Ovary (tissue), 10 donors: ENCODE measurements at regions of chr20 and their contacts with region 1.

Region 1: GRCh38 chr20:38057351-38057972 is 23.9 kb downstream of the RPRD1B start:
- DNase-seq: peak; percentile 74 to 89 (median 86)
- H3K4me3 ChIP-seq: no peak overlapping the region
- H3K27ac ChIP-seq: no peak overlapping the region
- H3K4me1 ChIP-seq: no peaks in the 10 kb centered on the region
- H3K27me3 ChIP-seq: no peaks in the 10 kb centered on the region
- CTCF ChIP-seq: peak; percentile 72 to 83 (median 77)
- EP300 ChIP-seq: no peak
- POLR2A ChIP-seq: no peak

Region 2: GRCh38 chr20:37777012-37777950 is 280.2 kb before region 1 on chr20:
- intact Hi-C with region 1: no loop called
- DNase-seq: no peak
- H3K4me3 ChIP-seq: no peak overlapping the region
- H3K27ac ChIP-seq: no peak overlapping the region
- H3K4me1 ChIP-seq: no peaks in the 10 kb centered on the region
- H3K27me3 ChIP-seq: no peaks in the 10 kb centered on the region
- CTCF ChIP-seq: no peak
- EP300 ChIP-seq: no peak
- POLR2A ChIP-seq: no peak

Region 3: DNA sequence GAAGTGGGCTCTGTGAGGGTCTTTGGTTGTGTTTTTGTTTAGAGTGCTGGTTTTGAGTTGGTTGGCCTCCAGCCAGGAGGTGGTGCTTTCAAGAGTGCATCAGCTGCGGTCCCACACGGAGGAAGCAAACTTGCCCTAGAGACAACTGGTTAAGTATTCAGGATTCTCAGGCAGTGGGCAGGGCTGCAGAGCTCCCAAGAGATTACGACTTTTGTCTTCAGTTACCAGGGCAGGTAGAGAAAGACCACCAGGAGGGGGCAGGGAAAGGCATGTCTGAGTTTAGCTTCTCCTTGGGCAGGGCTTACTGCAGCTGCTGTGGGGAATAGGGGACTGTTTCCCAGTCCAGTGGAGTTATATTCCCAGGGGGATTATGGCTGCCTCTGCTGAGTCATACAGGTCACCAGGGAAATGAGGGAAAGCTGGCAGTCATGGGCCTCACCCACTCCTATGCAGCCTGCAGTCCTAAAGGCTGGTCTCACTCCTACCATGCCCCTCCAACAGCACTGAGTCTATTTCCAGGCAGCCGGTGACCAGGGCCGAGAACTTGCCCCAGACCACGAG is 88.5 kb before region 1 on chr20:
- intact Hi-C with region 1: no loop called
- DNase-seq: no peak
- H3K4me3 ChIP-seq: no peak overlapping the region
- H3K27ac ChIP-seq: no peak overlapping the region
- H3K4me1 ChIP-seq: no peaks in the 10 kb centered on the region
- H3K27me3 ChIP-seq: no peaks in the 10 kb centered on the region
- CTCF ChIP-seq: no peak
- EP300 ChIP-seq: no peak
- POLR2A ChIP-seq: no peak

Region 4: GRCh38 chr20:38315290-38315966 is 258.0 kb after region 1 on chr20:
- intact Hi-C with region 1: loop called (anchors 5 to 10 kb)
- DNase-seq: peak in 4 of 5 donors; percentile 30 to 50 (median 41)
- H3K4me3 ChIP-seq: no peak overlapping the region
- H3K27ac ChIP-seq: no peak overlapping the region
- H3K4me1 ChIP-seq: no peaks in the 10 kb centered on the region
- H3K27me3 ChIP-seq: no peaks in the 10 kb centered on the region
- CTCF ChIP-seq: peak in 1 of 3 donors; percentile 26
- EP300 ChIP-seq: no peak
- POLR2A ChIP-seq: no peak

Region 5: DNA sequence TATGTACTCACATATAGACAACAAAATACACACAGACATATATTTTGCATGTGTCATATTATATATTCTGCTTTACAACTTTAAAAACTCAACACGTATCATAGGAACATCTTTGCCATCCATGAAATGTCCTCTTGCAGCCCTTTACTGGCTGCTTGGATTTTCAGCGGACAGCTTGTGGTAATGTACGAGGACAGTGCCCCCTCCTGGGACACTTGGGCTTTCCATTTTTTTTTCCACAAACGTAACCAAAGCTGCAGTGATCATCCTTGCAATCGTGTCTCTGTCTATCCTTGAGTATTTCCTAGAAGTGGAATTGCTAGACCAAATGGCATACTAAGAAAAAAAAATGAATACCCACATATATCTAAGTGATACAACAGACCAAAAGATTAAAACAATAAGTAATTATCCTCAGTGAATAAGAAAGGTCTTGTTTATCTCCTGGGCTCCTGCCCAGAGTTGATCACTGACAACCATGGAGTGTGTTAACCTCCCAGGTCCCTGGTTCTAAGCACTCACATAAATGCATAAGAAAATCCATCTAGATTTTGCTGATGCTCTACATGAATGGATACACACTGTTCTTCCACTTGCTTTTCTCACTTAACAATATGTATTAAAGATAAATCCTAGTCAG is 264.6 kb after region 1 on chr20:
- intact Hi-C with region 1: loop called in 3 of 4 experiments (anchors 5 to 10 kb)
- DNase-seq: peak; percentile 41 to 70 (median 56)
- H3K4me3 ChIP-seq: no peak overlapping the region
- H3K27ac ChIP-seq: no peak overlapping the region
- H3K4me1 ChIP-seq: no peaks in the 10 kb centered on the region
- H3K27me3 ChIP-seq: no peaks in the 10 kb centered on the region
- CTCF ChIP-seq: peak; percentile 30 to 75 (median 70)
- EP300 ChIP-seq: no peak
- POLR2A ChIP-seq: no peak

Region 6: GRCh38 chr20:38907918-38908677 is 850.6 kb after region 1 on chr20:
- intact Hi-C with region 1: no loop called
- DNase-seq: no peak
- H3K4me3 ChIP-seq: no peak overlapping the region
- H3K27ac ChIP-seq: no peak overlapping the region
- H3K4me1 ChIP-seq: no peaks in the 10 kb centered on the region
- H3K27me3 ChIP-seq: no peaks in the 10 kb centered on the region
- CTCF ChIP-seq: no peak
- EP300 ChIP-seq: no peak
- POLR2A ChIP-seq: no peak